Colonic mucosa (tissue), 4 donors: ENCODE measurements at regions of chr5 and their contacts with region 1.

Region 1: GRCh38 chr5:168219515-168220410 is 71.7 kb upstream of the WWC1 start:
- DNase-seq: peak; percentile 72
- H3K4me3 ChIP-seq: no peak overlapping the region
- H3K27ac ChIP-seq: no peak overlapping the region
- H3K4me1 ChIP-seq: no peaks in the 10 kb centered on the region
- H3K27me3 ChIP-seq: no peaks in the 10 kb centered on the region
- CTCF ChIP-seq: peak; percentile 90

Region 2: DNA sequence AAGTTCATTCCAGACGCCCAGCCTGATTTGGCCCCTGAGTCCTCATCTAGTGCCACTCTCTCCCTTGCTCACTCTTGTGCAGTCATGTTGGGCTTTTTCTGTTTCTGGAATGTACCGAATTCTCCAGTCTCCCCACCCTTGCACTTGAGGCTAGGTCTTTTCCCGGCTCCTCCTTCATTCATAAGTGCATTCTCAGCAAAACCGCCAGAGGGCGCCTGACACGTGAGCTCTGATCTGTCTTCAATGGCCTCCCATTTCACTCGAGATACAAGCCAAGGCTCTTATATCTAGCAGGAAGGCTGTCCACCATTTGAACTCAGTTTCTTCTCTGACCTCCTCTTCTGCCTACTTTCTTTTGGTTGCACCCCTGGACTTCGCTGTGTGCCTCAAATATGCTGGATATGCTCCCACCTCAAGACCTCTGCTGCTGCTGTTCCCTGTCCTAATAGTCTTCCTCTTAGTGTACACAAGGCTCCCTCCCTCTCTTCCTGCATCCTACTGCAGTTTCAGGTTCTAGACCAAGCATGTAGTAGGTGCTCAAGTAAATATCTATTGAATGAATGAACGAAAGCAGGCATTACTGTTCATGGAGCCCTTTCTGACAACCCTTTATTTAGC is 496.4 kb before region 1 on chr5:
- intact Hi-C with region 1: loop called (anchors 5 kb)
- DNase-seq: peak; percentile 73
- H3K4me3 ChIP-seq: no peak overlapping the region
- H3K27ac ChIP-seq: no peak overlapping the region
- H3K4me1 ChIP-seq: no peaks in the 10 kb centered on the region
- H3K27me3 ChIP-seq: no peaks in the 10 kb centered on the region
- CTCF ChIP-seq: peak; percentile 90

Region 3: DNA sequence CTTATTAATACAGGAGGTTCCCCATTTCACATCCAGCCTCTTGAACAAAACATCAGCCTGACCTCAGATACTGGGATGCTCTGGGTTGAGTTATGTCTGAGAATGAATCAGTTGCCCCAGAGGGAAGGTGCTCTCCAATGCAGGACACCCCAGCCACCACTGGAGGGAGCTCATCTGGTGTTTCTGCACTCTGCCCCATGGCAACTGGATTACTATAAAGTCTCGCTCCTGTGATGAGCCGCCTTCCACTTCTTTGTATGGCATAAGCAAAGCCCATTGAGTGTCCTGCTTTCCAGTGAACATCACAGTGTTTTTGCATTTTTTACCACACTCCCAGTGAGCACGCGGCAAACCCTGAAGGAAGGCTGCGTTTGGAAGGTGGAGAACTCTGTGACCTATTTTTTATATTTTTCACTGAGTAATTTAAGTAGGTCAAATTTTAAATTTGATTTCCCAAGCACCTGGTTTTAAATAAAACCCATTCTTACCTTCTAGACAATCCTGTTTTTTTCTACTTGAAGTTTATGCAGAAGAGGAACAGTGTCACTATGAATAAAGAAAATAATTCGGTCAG is 105.2 kb before region 1 on chr5:
- intact Hi-C with region 1: loop called (anchors 2 kb)
- DNase-seq: peak; percentile 83
- H3K4me3 ChIP-seq: no peak overlapping the region
- H3K27ac ChIP-seq: no peak overlapping the region
- H3K4me1 ChIP-seq: no peaks in the 10 kb centered on the region
- H3K27me3 ChIP-seq: no peaks in the 10 kb centered on the region
- CTCF ChIP-seq: peak; percentile 69